ENCODE measurements at regions of chr17 and their contacts with region 1.

Region 1: DNA sequence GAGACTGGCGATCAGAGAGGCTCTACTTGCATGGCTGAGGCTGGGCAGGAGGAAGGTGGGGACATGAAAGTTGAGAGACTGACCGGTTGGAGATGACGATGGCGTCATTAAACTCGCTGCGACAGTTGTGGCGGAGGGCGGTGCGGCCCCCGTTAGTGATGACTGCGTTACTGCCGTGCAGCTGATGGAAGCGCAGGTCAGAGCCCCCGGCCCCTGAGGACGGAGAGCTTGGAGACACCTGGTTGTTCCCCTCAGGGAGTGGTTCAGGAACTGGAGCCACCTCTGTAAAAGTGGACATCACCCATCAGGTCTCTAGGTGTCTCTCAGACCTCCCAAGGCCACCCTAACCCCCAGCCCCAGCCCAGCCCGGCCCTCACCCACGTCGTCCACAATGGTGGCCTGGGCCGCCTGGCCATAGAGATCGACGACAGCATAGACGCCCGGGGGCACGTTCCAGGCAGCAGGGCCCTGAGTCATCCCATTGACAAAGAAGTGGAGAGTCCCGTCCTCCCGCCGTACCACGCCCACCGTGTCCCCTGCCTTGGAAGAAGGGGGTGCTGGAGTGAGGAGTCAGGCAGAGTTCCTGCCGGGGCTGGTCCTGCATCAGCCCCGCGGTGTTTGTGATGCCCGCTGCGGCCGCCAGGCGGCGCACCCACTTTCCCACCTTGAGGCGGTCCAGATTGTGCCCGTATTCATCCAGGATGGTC is 5.3 kb downstream of the NEURL4 start:
- DNase-seq: peak; percentile 32
- H3K4me3 ChIP-seq: no peak overlapping the region
- H3K27ac ChIP-seq: no peak overlapping the region
- H3K4me1 ChIP-seq: peaks cover 6% of the 10 kb centered on the region
- H3K27me3 ChIP-seq: no peaks in the 10 kb centered on the region
- CTCF ChIP-seq: peak; percentile 91 to 95
- POLR2A ChIP-seq: no peak

Region 2: GRCh38 chr17:7344399-7344798 is 20.5 kb after region 1 on chr17:
- CTCF ChIA-PET with region 1: interaction called, 13 read pairs
- POLR2A ChIA-PET with region 1: no interaction called
- dilution Hi-C with region 1: no loop called
- intact Hi-C with region 1: loop called (anchors 1 kb)
- DNase-seq: no peak
- H3K4me3 ChIP-seq: no peak overlapping the region
- H3K27ac ChIP-seq: no peak overlapping the region
- H3K4me1 ChIP-seq: no peaks in the 10 kb centered on the region
- H3K27me3 ChIP-seq: no peaks in the 10 kb centered on the region
- CTCF ChIP-seq: no peak
- POLR2A ChIP-seq: no peak

Measured in endothelial cell of umbilical vein (primary cell).